Activated CD8-positive, alpha-beta T cell treated with anti-CD3 and anti-CD28 coated beads for 36 hours (primary cell): ENCODE measurements at regions of chr11 and their contacts with region 1.

Region 1: DNA sequence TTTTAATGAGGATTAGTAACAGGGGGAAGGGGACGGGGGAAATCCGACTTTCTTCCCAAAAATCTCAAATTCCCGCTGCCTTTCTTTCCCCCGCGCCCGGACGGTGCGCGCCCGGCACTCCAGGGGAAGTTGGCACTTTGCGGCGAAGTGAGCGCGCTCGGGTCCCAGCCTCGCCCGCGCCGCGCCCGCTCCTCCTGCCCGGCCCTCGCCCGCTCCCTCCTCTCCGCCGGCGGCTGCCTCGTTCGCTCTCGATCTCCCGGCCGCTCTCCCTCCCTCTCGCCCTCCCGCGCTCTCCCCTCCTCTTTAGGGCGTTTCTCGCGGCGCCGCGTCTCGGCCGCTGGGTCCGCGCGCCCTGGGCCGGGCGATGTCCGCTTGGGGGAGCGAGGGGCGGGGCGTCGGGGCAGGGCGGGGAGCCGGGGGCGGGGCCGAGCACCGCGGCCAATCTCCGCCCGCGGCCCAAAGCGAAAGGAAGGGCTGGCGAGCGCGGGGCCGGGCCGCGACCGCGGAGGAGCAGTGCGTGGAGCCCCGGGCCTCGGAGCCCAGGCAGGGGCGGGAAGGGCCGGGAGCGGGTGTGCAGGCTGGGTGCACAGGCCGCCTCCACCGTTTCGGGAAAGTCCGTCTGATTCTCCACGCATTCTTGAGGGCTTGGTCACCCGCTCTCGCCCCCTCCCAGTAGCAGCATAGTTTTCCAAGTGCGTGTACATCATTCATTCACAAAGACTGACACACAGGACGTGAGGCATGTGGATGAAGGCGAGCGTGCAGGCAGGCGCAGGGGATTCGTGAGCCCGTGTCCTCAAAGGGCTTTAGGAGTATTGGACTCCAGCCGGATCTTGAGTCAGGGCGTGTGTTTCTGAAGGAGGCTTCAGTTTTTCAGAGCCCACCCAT is 65.1 kb downstream of the ETS1 start:
- DNase-seq: peak; percentile 92
- ATAC-seq: peak; percentile 77
- H3K4me3 Mint-ChIP-seq: peak overlapping the region; percentile 95
- H3K27ac Mint-ChIP-seq: peak overlapping the region; percentile 96
- H3K4me1 Mint-ChIP-seq: peaks cover 37% of the 10 kb centered on the region
- H3K27me3 Mint-ChIP-seq: no peaks in the 10 kb centered on the region
- CTCF ChIP-seq: no peak

Region 2: GRCh38 chr11:128290106-128290840 is 232.0 kb before region 1 on chr11:
- CTCF ChIA-PET with region 1: interaction called, 26 read pairs
- POLR2A ChIA-PET with region 1: interaction called, 22 read pairs
- intact Hi-C with region 1: no loop called
- DNase-seq: peak; percentile 87
- ATAC-seq: peak; percentile 62
- H3K4me3 Mint-ChIP-seq: peak overlapping the region; percentile 83
- H3K27ac Mint-ChIP-seq: peak overlapping the region; percentile 95
- H3K4me1 Mint-ChIP-seq: peaks cover 94% of the 10 kb centered on the region
- H3K27me3 Mint-ChIP-seq: no peaks in the 10 kb centered on the region
- CTCF ChIP-seq: peak; percentile 88

Region 3: DNA sequence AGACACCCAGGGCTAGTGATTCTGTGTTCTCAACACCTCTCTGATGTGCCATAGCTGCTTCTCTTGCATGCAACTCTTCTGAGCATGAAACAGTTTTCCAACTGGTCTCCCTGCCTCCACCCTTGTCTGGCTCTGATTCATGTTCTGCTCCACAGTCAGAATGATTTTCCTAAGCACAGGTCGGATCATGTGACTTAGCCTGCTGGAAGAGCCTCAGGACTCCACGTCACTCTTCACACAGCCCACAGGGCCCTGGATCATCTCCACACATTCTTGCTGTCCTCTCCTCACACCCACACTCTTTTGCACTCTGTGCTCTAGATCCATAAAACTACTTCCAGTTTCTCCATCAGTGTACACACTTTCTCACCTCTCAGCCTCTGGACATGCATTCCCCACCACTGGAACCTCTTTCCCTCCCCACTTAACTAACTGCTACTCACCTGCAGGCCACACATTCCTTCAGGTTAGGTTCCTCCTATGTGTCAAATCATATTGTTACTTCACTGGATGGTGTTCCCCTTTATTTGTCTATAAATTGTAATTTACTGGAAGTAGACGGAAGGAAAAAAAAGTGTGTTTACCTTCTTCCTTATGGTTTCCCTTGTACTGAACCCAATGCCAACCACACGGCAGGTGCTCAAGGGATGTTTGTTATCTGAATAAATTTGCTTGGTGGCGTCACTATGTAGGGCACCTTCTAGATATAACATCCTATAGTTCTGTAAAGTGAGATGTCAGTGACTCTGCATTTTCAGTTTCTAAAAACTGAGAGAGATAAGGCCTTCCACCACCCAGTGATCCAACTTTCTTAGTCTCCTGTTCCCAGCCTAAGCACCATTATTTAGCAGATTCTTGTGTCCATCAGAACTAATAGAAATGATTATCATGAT is 68.6 kb before region 1 on chr11:
- CTCF ChIA-PET with region 1: no interaction called
- POLR2A ChIA-PET with region 1: no interaction called
- intact Hi-C with region 1: no loop called
- DNase-seq: no peak
- ATAC-seq: peak; percentile 18
- H3K4me3 Mint-ChIP-seq: no peak overlapping the region
- H3K27ac Mint-ChIP-seq: peak overlapping the region; percentile 77
- H3K4me1 Mint-ChIP-seq: peaks cover 76% of the 10 kb centered on the region
- H3K27me3 Mint-ChIP-seq: no peaks in the 10 kb centered on the region
- CTCF ChIP-seq: no peak

Region 4: DNA sequence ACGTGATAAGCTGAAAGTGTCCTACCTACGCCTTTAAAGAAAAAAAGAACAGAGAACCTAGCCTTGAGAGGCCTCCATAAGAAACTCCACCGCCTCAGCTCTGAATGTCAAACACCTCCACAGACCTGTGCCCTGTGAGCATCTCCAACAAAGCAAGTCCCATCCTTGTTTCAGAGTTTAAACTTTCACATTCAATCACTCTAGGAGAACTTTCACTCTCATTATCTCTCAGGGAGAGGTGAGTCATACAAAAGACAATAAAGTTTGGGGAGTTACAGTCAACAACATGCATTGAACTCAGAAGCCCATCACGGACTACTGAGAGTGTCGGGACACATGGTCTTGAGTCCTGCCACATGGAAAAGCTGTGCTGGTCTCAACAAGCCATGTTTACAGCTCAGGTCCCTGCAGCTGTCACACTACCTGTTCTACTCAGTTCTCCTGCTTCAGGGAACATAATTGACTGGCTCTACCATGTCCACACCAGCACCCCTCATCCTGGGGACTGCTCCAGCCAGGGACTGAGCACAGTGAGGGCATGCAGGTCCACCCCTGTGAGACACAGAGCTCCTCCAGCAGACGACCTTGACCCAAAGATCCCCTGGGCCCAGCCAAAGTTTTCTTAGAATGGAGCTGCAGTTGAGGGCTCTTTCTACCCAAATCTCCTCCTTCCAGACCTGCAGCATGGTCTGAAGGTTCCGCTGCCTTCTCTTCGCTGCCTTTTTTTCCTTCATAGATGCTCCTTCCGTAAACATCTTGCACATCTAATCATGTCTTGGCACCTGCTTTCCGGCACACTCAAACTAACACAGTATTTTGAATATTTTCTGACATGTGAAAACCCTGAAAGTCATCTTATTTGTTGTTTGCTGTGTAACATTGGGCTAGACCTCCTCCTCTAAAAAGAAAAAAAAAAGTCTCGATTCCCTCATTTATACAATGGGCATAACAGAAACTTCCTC is 49.9 kb before region 1 on chr11:
- CTCF ChIA-PET with region 1: interaction called, 29 read pairs
- POLR2A ChIA-PET with region 1: interaction called, 78 read pairs
- intact Hi-C with region 1: loop called (anchors 2 kb)
- DNase-seq: peak; percentile 84
- ATAC-seq: peak; percentile 63
- H3K4me3 Mint-ChIP-seq: peak overlapping the region; percentile 77
- H3K27ac Mint-ChIP-seq: peak overlapping the region; percentile 97
- H3K4me1 Mint-ChIP-seq: peaks cover 92% of the 10 kb centered on the region
- H3K27me3 Mint-ChIP-seq: no peaks in the 10 kb centered on the region
- CTCF ChIP-seq: no peak

Region 5: DNA sequence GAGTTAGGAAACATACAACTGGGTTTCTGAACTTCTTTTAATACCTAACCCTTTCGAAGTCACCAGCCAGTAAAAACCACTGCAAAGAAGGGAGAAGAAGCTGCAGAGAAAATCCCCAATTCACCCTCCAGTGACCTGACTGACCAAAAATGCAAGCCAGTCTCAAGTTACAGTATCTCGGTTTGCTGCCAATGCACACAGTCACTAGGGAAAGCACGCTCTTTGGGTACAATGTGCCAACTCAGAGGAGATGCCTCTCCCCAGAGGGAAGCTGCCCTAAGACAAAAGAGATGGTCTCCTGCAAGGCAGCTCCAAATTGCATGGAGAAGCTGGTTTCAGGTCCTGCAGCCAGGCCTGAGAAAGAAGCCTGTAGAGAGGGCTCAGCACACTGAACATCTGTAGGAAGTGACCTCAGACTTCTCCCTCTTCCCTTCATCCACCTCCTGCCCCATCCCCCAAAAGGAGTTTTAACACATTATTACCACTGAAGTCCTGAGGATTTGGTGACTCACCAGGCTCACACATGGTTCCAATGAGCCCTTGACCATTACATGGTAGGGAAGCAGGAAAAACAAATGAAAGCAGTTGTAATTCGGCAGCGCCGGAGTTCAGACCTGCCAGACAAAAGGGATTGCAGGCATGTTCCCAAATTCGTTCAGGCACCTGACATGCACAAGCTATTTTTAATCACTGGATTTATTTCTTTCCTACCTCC is 25.1 kb before region 1 on chr11:
- CTCF ChIA-PET with region 1: interaction called, 15 read pairs
- POLR2A ChIA-PET with region 1: interaction called, 661 read pairs
- intact Hi-C with region 1: no loop called
- DNase-seq: peak; percentile 49
- ATAC-seq: no peak
- H3K4me3 Mint-ChIP-seq: peak overlapping the region; percentile 88
- H3K27ac Mint-ChIP-seq: peak overlapping the region; percentile 98
- H3K4me1 Mint-ChIP-seq: peaks cover 94% of the 10 kb centered on the region
- H3K27me3 Mint-ChIP-seq: no peaks in the 10 kb centered on the region
- CTCF ChIP-seq: no peak

Region 6: GRCh38 chr11:128544471-128545051 is 22.3 kb after region 1 on chr11:
- CTCF ChIA-PET with region 1: interaction called, 19 read pairs
- POLR2A ChIA-PET with region 1: interaction called, 18 read pairs
- intact Hi-C with region 1: no loop called
- DNase-seq: peak; percentile 32
- ATAC-seq: peak; percentile 55
- H3K4me3 Mint-ChIP-seq: peak overlapping the region; percentile 69
- H3K27ac Mint-ChIP-seq: peak overlapping the region; percentile 78
- H3K4me1 Mint-ChIP-seq: peaks cover 56% of the 10 kb centered on the region
- H3K27me3 Mint-ChIP-seq: no peaks in the 10 kb centered on the region
- CTCF ChIP-seq: no peak

Region 7: GRCh38 chr11:128563308-128563707 is 41.0 kb after region 1 on chr11:
- CTCF ChIA-PET with region 1: no interaction called
- POLR2A ChIA-PET with region 1: no interaction called
- intact Hi-C with region 1: no loop called
- DNase-seq: no peak
- ATAC-seq: no peak
- H3K4me3 Mint-ChIP-seq: no peak overlapping the region
- H3K27ac Mint-ChIP-seq: no peak overlapping the region
- H3K4me1 Mint-ChIP-seq: peaks cover 24% of the 10 kb centered on the region
- H3K27me3 Mint-ChIP-seq: no peaks in the 10 kb centered on the region
- CTCF ChIP-seq: no peak

Region 8: DNA sequence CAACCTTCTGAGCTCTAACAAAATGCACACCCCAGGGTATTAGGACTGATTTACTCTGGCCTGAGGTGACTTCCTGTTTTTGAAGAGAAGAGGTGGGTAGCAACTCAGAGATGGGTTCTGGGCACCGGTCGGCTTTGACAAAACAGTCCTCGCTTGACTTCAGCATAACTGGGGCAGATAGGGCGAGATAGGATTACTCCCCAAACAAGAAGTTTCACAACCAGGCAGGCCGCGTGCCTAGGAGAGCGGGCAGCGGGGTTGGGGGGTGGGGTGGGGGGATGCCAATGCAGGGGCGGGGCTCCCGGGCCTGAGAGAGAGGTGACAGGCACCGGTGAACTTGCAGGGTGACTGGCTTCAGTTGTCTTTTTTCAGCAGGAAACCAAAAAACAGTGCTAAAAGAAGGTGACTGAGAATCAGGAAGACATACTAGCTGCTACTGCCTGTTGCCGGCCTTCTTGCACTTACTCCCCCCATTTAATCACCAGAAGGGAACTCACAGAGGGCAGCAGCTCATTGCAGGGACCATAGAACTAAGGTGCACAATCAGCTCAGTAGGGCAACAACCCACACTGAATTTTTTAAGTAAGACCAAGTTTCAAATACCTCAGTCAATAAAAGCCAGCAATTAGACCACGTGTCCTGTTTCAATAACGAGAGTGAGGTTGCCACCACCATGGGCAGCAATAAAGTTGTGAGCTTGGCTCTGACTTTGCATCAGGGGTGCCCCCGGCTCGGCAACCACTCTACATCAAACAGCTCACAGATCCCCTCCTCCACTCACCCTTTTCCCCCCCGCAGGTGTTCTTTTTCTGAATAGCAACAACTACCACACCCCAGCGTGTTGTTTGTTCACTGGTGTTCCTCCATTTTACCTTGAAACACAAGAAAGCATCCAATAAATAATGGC is 102.2 kb after region 1 on chr11:
- CTCF ChIA-PET with region 1: interaction called, 400 read pairs
- POLR2A ChIA-PET with region 1: interaction called, 78 read pairs
- intact Hi-C with region 1: loop called (anchors 1 kb)
- DNase-seq: peak; percentile 77
- ATAC-seq: peak; percentile 57
- H3K4me3 Mint-ChIP-seq: peak overlapping the region; percentile 56
- H3K27ac Mint-ChIP-seq: peak overlapping the region; percentile 94
- H3K4me1 Mint-ChIP-seq: peaks cover 97% of the 10 kb centered on the region
- H3K27me3 Mint-ChIP-seq: no peaks in the 10 kb centered on the region
- CTCF ChIP-seq: no peak